ENCODE measurements at regions of chr20 and their contacts with region 1.

Region 1: DNA sequence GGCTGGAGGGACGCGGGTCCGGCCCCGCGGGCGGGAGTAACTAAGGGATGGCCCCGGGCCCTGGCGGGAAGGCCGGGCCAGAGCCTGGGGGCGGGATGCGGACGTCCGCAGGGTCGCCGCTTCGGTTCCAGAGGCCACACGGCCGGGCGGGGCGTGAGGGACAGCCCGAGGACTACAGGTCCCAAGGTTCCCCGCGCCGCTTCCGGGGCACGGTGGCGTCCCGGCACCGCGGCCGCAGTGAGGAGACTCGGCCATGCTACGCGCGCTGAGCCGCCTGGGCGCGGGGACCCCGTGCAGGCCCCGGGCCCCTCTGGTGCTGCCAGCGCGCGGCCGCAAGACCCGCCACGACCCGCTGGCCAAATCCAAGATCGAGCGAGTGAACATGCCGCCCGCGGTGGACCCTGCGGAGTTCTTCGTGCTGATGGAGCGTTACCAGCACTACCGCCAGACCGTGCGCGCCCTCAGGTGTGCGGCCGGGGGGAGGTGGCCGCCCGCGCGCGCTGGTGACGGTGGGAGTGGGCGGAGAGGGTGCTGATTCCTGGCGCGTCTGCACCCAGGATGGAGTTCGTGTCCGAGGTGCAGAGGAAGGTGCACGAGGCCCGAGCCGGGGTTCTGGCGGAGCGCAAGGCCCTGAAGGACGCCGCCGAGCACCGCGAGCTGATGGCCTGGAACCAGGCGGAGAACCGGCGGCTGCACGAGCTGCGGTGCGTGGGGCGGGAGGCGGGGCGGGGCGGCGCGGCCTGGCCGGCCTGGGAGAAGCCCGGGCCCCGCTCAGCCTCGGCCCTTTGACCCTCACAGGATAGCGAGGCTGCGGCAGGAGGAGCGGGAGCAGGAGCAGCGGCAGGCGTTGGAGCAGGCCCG is at the start of gene MRPS26:
- DNase-seq: peak; percentile 79 to 84
- ATAC-seq: peak; percentile 88 to 92
- H3K4me3 ChIP-seq: peak within 1 kb of the TSS; percentile 86 to 95 (median 92)
- H3K27ac ChIP-seq: peak within 1 kb of the TSS; percentile 87 to 96 (median 93)
- H3K4me1 ChIP-seq: peaks cover 11 to 22% of the 10 kb centered on the region in 2 donors
- H3K27me3 ChIP-seq: no peaks in the 10 kb centered on the region
- CTCF ChIP-seq: no peak
- POLR2A ChIP-seq: peak; percentile 61 to 70
- total RNA-seq, gene MRPS26: 58.7 to 69.8 (median 62.8) TPM

Region 2: DNA sequence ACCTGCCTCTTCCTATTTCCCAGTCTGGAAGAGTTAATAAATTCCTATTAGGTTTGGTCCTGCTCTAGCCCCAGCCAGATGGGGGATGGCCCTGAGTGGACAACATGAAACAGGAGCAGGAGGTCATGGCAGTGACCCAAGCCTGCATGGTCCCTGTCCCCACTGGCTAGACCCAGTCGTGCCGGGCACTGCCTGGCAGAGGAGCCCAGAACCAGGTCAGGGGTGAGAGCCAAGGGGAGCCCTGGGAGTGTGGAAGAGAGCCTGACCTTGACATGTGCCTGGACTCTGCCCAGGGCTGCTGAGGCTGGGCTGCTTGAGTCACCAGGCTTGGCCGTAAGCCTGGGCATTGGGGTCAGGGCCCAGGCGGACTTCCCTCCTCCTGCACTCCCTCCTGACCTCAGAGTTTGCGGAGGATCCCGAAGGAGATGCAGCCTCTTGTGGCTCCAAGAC is 34.9 kb after region 1 on chr20:
- in situ Hi-C with region 1: no loop called
- intact Hi-C with region 1: no loop called
- DNase-seq: peak; percentile 80 to 88
- ATAC-seq: peak; percentile 95 to 96
- H3K4me3 ChIP-seq: no peak overlapping the region
- H3K27ac ChIP-seq: peak overlapping the region; percentile 45 to 66 (median 56)
- H3K4me1 ChIP-seq: peaks cover 11% of the 10 kb centered on the region in 2 donors
- H3K27me3 ChIP-seq: peaks cover 5 to 15% (median 10%) of the 10 kb centered on the region in 3 donors
- CTCF ChIP-seq: no peak
- POLR2A ChIP-seq: no peak

Region 3: DNA sequence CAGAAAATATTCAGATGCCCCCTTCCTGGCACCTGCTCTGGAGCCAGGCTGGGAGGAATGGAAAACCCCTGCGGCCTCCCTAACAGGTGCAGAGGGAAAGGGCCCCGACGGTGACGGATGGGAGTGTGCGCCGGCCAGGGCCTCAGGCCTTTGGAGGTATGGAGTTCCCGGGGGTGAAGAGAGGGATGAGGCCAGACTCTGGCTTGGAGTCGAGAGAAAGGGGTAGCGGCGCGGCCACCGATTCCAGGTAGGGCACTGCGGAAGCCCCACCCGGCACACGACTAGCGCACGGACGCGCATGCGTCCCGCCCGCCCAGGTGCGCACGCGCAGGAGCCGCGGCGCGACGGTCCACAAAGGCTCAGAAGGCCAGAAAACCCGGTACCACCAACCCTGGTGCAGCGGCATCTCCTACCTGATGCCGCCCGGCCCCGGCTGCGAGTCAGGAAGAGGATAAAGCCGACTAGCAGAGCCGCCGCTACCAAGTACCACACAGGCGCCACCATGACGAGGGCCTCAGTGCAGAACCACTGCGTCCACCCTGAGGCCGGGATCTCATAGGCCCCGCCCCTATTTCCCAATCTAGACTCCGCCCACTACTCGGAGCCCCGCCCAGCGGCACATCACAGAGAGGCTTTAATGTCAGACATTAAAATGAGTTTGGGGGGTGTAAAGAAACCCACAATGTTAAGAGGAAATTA is 158.2 kb after region 1 on chr20 and contains the start of gene DDRGK1:
- in situ Hi-C with region 1: loop called in 1 of 4 experiments (anchors 25 kb)
- intact Hi-C with region 1: loop called (anchors 10 kb)
- DNase-seq: peak; percentile 67 to 87
- ATAC-seq: peak; percentile 95 to 97
- H3K4me3 ChIP-seq: peak within 1 kb of the TSS; percentile 74 to 92 (median 90)
- H3K27ac ChIP-seq: peak within 1 kb of the TSS; percentile 92 to 94 (median 94)
- H3K4me1 ChIP-seq: peaks cover 8 to 19% of the 10 kb centered on the region in 2 donors
- H3K27me3 ChIP-seq: no peaks in the 10 kb centered on the region
- CTCF ChIP-seq: no peak
- POLR2A ChIP-seq: peak; percentile 62 to 77
- total RNA-seq, gene DDRGK1: 55.2 to 75.7 (median 64.7) TPM